B cell (primary cell): ENCODE measurements at regions of chr18 and their contacts with region 1.

Region 1: DNA sequence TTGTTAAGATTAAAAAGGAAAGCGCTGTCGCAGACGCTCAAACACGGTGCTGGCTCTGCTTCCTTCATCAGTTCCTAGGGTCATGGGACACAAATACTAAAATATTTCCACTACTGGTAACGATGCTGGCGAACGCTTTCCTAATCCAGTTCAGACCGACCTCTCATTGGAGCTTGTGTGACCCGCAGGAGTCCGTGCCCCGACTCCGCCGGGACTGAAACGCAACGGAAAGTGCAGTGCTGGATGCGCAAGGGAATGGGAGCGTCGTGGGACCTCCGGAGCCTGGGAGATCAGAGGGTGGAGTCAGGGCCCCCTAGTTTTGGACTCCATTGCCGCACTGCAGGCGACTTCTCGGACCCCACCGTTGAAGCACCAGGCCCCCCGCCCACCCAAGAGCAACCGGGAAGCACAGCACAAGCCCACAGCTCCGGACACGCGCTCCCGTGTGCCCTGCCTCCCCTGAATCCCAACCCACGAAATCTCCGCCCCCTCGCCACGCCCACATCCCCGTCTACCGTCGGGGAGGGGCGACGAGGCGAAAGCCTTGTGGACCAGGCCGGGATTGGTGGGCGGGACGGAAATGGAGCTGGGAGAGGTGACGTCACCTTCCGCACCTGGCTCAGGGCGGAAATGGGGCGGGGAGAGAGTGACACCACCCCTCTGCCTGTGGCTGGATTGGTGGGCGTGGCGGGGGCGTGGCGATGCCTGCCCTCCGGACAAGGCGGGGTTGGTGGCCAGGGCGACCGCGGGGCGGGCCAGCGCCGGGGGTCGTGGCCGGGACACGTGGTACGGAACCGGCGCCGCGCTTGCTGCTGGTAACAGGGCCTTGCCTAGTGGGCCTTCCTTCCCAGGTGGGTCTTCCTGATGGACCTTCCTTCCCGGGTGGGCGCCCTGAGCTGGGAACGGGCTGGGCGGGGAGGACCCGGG is at the start of gene CNDP2:
- DNase-seq: peak; percentile 99
- ATAC-seq: peak; percentile 79
- H3K4me3 ChIP-seq: peak within 1 kb of the TSS; percentile 19 to 95 (median 81)
- H3K4me3 Mint-ChIP-seq: peak within 1 kb of the TSS; percentile 95
- H3K27ac ChIP-seq: peak within 1 kb of the TSS; percentile 85 to 91
- H3K27ac Mint-ChIP-seq: peak within 1 kb of the TSS; percentile 94
- H3K4me1 ChIP-seq: peaks cover 38% of the 10 kb centered on the region in 2 donors
- H3K4me1 Mint-ChIP-seq: peaks cover 43% of the 10 kb centered on the region
- H3K27me3 ChIP-seq: no peaks in the 10 kb centered on the region
- H3K27me3 Mint-ChIP-seq: no peaks in the 10 kb centered on the region
- CTCF ChIP-seq: no peak
- total RNA-seq, gene CNDP2: 182 and 196 TPM in 2 replicates

Region 2: DNA sequence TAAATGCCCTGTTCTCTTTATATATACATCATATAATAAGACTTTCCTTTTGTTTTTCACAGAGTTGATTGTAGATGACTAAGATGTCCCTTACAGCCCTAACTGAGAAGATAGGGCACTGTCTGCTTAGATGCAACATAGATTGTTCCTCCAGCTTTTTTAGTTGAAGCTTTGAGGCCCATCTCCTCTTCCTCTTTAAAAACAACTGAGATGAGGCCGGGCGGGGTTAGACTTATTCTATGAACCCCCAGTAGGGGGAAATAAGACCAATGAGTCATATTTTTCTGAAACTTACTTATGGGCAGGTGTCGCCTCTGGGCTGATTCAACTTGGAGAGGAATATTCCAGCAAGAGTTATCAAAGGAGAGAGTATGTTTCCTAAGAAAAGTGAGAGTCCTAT is 432.8 kb before region 1 on chr18:
- CTCF ChIA-PET with region 1: no interaction called
- POLR2A ChIA-PET with region 1: interaction called, 3 read pairs
- intact Hi-C with region 1: loop called (anchors 10 kb)
- DNase-seq: peak; percentile 65
- ATAC-seq: peak; percentile 53
- H3K4me3 ChIP-seq: peak overlapping the region in 1 of 5 experiments; percentile 6
- H3K4me3 Mint-ChIP-seq: peak overlapping the region; percentile 29
- H3K27ac ChIP-seq: peak overlapping the region; percentile 72 to 77
- H3K27ac Mint-ChIP-seq: peak overlapping the region; percentile 94
- H3K4me1 ChIP-seq: peaks cover 53 to 59% of the 10 kb centered on the region in 2 donors
- H3K4me1 Mint-ChIP-seq: peaks cover 62% of the 10 kb centered on the region
- H3K27me3 ChIP-seq: no peaks in the 10 kb centered on the region
- H3K27me3 Mint-ChIP-seq: no peaks in the 10 kb centered on the region
- CTCF ChIP-seq: no peak

Region 3: GRCh38 chr18:74291771-74292540 is 203.9 kb before region 1 on chr18 and contains the start of gene CYB5A:
- CTCF ChIA-PET with region 1: no interaction called
- POLR2A ChIA-PET with region 1: no interaction called
- intact Hi-C with region 1: loop called (anchors 1 kb)
- DNase-seq: peak; percentile 99
- ATAC-seq: peak; percentile 96
- H3K4me3 ChIP-seq: peak within 1 kb of the TSS; percentile 66 to 97 (median 85)
- H3K4me3 Mint-ChIP-seq: no peak within 1 kb of the TSS
- H3K27ac ChIP-seq: peak within 1 kb of the TSS; percentile 56 to 66
- H3K27ac Mint-ChIP-seq: peak within 1 kb of the TSS; percentile 89
- H3K4me1 ChIP-seq: peaks cover 15 to 26% of the 10 kb centered on the region in 2 donors
- H3K4me1 Mint-ChIP-seq: peaks cover 41% of the 10 kb centered on the region
- H3K27me3 ChIP-seq: no peaks in the 10 kb centered on the region
- H3K27me3 Mint-ChIP-seq: no peaks in the 10 kb centered on the region
- CTCF ChIP-seq: peak; percentile 3
- total RNA-seq, gene CYB5A: 46.4 and 46.9 TPM in 2 replicates

Region 4: DNA sequence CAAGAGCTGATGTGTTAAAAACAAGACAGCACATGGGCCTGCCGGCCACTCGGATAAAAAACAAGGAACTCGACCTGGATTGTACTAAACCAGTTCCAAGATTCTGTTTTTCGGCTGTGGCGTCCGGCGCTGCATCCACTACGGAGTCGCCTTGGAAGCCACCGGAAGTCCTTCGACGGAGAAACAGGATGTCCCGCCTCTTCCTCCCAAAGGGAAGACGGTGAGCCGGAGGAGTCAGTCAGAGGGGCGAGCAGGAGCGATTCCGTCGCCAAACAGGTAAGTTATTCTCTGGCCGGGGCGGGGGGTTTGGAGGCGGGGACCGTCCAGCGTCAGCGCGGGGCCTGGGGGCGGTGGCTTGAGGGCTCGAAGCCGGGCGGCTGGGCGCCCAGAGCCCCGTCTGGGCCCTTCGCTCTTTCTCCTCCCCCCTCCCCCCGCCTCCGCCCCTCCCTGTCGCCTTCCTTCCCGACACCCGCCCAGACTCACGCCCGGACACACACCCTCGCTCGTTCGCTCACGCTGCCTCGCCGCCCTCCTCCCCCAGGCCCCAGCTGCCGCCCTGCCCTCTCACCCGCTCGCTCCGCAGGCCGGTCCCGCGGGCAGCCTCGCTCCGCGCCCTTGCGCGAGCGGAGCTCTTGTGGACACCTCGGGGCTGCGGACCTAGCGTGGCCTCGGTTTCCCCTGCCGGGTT is 102.0 kb after region 1 on chr18 and contains the start of gene ZNF407:
- CTCF ChIA-PET with region 1: interaction called, 4 read pairs
- POLR2A ChIA-PET with region 1: interaction called, 6 read pairs
- intact Hi-C with region 1: loop called (anchors 1 kb)
- DNase-seq: peak; percentile 96
- ATAC-seq: peak; percentile 83
- H3K4me3 ChIP-seq: peak within 1 kb of the TSS; percentile 65 to 99 (median 86)
- H3K4me3 Mint-ChIP-seq: peak within 1 kb of the TSS; percentile 97
- H3K27ac ChIP-seq: peak within 1 kb of the TSS; percentile 88 to 96
- H3K27ac Mint-ChIP-seq: peak within 1 kb of the TSS; percentile 98
- H3K4me1 ChIP-seq: peaks cover 21 to 22% of the 10 kb centered on the region in 2 donors
- H3K4me1 Mint-ChIP-seq: peaks cover 51% of the 10 kb centered on the region
- H3K27me3 ChIP-seq: no peaks in the 10 kb centered on the region
- H3K27me3 Mint-ChIP-seq: no peaks in the 10 kb centered on the region
- CTCF ChIP-seq: no peak
- total RNA-seq, gene ZNF407: 37.1 and 37.9 TPM in 2 replicates

Region 5: DNA sequence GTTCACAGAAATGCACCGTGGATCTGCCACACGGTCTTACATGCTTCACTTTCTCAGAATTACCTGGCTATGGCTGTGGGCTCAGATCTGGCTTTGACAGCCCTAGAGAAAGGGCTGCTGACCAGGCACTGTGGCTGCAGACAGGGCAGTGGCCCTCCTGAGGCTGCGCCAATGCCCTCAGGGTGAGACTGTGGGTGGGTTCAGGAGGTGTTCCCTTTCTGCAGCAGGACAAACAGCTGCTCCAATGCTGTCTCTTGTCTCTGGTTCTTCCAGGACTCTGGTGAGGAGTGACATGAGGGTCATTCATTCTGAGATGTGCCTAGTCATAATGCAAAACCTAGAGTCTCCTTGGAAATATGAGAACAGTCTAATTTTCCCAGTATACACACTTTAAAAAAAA is 1022.2 kb after region 1 on chr18:
- CTCF ChIA-PET with region 1: no interaction called
- POLR2A ChIA-PET with region 1: no interaction called
- intact Hi-C with region 1: no loop called
- DNase-seq: no peak
- ATAC-seq: no peak
- H3K4me3 ChIP-seq: no peak overlapping the region
- H3K4me3 Mint-ChIP-seq: no peak overlapping the region
- H3K27ac ChIP-seq: no peak overlapping the region
- H3K27ac Mint-ChIP-seq: no peak overlapping the region
- H3K4me1 ChIP-seq: no peaks in the 10 kb centered on the region
- H3K4me1 Mint-ChIP-seq: no peaks in the 10 kb centered on the region
- H3K27me3 ChIP-seq: no peaks in the 10 kb centered on the region
- H3K27me3 Mint-ChIP-seq: no peaks in the 10 kb centered on the region
- CTCF ChIP-seq: no peak

Region 6: GRCh38 chr18:76492669-76493212 is 1996.9 kb after region 1 on chr18:
- CTCF ChIA-PET with region 1: no interaction called
- POLR2A ChIA-PET with region 1: no interaction called
- intact Hi-C with region 1: loop called (anchors 5 kb)
- DNase-seq: peak; percentile 99
- ATAC-seq: peak; percentile 74
- H3K4me3 ChIP-seq: peak overlapping the region; percentile 62 to 97 (median 77)
- H3K4me3 Mint-ChIP-seq: peak overlapping the region; percentile 95
- H3K27ac ChIP-seq: peak overlapping the region; percentile 67 to 69
- H3K27ac Mint-ChIP-seq: peak overlapping the region; percentile 94
- H3K4me1 ChIP-seq: peaks cover 18 to 40% of the 10 kb centered on the region in 2 donors
- H3K4me1 Mint-ChIP-seq: peaks cover 56% of the 10 kb centered on the region
- H3K27me3 ChIP-seq: peaks cover 0 to 10% (median 3%) of the 10 kb centered on the region in 4 experiments
- H3K27me3 Mint-ChIP-seq: peaks cover 21% of the 10 kb centered on the region
- CTCF ChIP-seq: no peak